ENCODE measurements at regions of chr2 and their contacts with region 1.

Region 1: DNA sequence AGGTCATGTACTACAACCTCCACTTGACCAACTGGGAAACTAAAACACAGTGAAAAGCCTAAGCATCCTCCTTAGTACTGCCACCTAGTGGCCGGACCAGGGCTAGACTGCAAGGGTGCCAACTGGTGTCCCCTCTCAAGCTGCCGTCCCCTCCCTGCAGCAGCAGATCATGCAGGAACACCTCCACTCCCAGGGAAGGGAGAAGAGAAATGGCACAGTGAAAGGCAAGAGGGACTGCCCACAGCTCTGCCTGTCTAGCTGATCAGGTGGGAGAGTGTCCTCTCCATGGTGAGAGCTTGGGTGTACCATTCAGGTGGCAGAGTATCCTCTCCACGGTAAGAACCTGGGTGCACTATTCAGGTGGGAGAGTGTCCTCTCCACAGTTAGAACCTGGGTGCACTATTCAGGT is 78.1 kb downstream of the AAK1 start:
- DNase-seq: peak; percentile 70
- H3K4me3 Mint-ChIP-seq: no peak overlapping the region
- H3K27ac Mint-ChIP-seq: peak overlapping the region; percentile 37
- H3K4me1 Mint-ChIP-seq: peaks cover 42% of the 10 kb centered on the region
- H3K27me3 Mint-ChIP-seq: no peaks in the 10 kb centered on the region

Region 2: DNA sequence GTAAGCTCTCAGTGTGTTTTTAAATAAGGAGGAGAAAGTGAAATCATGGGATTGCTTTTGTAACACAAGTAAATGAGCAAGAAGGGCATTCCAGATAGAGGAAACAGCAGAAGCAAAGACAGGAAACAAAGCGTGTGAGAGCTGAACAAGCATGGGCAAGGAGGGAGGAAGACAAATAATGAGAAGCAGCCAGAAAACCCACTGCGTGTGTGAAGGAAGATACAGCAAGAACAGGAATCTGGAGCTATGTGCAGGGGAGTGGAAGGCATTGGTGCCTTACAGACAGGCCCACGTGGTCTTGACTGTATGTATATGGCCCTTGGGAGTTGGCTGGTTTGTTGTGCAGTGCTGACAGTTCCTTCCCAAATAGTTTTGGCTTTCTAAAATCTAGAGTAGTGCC is 10.5 kb before region 1 on chr2:
- CTCF ChIA-PET with region 1: interaction called, 33 read pairs
- POLR2A ChIA-PET with region 1: interaction called, 3 read pairs
- DNase-seq: no peak
- H3K4me3 Mint-ChIP-seq: no peak overlapping the region
- H3K27ac Mint-ChIP-seq: peak overlapping the region; percentile 10
- H3K4me1 Mint-ChIP-seq: peaks cover 27% of the 10 kb centered on the region
- H3K27me3 Mint-ChIP-seq: no peaks in the 10 kb centered on the region

Region 3: GRCh38 chr2:69588403-69588802 is 23.0 kb after region 1 on chr2:
- CTCF ChIA-PET with region 1: interaction called, 50 read pairs
- POLR2A ChIA-PET with region 1: interaction called, 3 read pairs
- DNase-seq: no peak
- H3K4me3 Mint-ChIP-seq: no peak overlapping the region
- H3K27ac Mint-ChIP-seq: no peak overlapping the region
- H3K4me1 Mint-ChIP-seq: peaks cover 66% of the 10 kb centered on the region
- H3K27me3 Mint-ChIP-seq: no peaks in the 10 kb centered on the region

Region 4: GRCh38 chr2:69628325-69629021 is 63.0 kb after region 1 on chr2:
- CTCF ChIA-PET with region 1: interaction called, 14 read pairs
- POLR2A ChIA-PET with region 1: interaction called, 3 read pairs
- DNase-seq: no peak
- H3K4me3 Mint-ChIP-seq: no peak overlapping the region
- H3K27ac Mint-ChIP-seq: no peak overlapping the region
- H3K4me1 Mint-ChIP-seq: peaks cover 20% of the 10 kb centered on the region
- H3K27me3 Mint-ChIP-seq: no peaks in the 10 kb centered on the region

Region 5: GRCh38 chr2:69659349-69659748 is 93.9 kb after region 1 on chr2:
- CTCF ChIA-PET with region 1: no interaction called
- POLR2A ChIA-PET with region 1: no interaction called
- DNase-seq: no peak
- H3K4me3 Mint-ChIP-seq: no peak overlapping the region
- H3K27ac Mint-ChIP-seq: no peak overlapping the region
- H3K4me1 Mint-ChIP-seq: peaks cover 16% of the 10 kb centered on the region
- H3K27me3 Mint-ChIP-seq: peaks cover 8% of the 10 kb centered on the region

Region 6: DNA sequence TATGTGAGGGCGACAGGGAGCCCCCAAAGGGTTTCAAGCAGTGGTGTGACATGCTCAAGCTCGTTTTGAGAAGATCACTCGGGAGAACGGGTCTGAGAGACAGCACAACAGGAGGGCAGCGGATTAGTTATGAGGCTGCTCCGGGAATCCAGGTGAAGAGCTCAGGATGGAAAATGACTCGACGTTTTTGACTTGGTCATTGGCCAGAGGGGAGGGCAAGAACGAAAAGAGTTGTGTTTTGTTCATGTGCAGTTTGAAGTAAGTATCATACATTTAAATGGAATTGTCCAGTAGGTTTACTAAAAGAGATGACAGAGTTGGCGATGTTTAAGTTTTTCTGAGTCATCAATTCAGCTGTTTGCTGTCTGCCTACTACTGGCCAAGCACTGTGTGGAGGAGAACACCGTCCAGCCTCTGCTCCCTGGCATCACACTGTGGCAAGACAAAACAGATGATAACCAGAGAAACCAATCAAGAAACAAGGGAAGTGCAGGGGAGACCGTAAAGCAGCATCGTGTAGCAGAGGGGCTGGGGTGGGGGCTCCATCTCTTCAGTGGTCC is 151.2 kb after region 1 on chr2:
- CTCF ChIA-PET with region 1: interaction called, 19 read pairs
- POLR2A ChIA-PET with region 1: no interaction called
- DNase-seq: no peak
- H3K4me3 Mint-ChIP-seq: no peak overlapping the region
- H3K27ac Mint-ChIP-seq: no peak overlapping the region
- H3K4me1 Mint-ChIP-seq: peaks cover 15% of the 10 kb centered on the region
- H3K27me3 Mint-ChIP-seq: no peaks in the 10 kb centered on the region